GM18951 (cell line): ENCODE measurements at regions of chr4 and their contacts with region 1.

Region 1: GRCh38 chr4:6720202-6720699 is 4.3 kb downstream of the BLOC1S4 start:
- POLR2A ChIP-seq: no peak

Region 2: DNA sequence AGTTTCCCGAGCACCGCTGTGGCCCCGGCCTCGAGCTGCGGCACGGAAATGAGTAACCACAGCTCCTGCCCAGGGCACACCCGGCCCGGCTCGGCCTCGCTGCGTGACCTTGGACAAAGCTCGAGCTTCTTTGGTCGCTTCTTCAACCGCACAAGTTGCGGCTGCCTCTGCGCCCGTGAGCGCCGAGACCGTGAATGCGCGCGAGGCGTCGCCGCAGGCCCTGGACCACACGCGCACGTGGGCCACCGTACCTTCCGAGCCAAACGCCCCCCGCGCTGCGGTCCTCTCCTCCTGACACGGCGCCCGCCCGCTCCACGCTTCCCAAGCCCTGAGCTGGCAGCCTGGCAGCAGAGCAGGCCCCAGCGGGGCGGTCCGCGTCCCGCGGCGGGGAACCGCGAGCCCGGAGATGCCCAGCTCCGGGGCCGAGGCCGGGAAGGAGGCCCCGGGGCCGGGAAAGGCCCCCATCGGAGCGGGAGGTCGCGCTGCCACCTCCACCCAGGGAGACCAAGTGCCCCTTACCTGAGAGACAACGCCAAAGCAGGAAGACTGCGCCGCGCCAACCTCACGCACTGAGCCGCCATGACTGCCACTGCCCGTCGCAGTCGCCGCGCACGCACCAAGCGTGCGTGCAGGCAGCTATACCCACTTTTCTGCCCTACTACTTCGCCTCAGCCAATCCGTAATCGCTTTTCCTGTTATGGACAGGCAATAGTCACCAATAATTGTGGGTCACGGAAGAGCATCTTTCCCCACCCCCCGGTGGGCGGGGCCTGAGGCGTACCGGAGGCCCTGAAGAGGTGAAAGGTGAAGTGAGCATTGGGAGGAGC is 347.4 kb after region 1 on chr4 and contains the start of gene GRPEL1:
- in situ Hi-C with region 1: loop called (anchors 10 kb)
- POLR2A ChIP-seq: peak; percentile 93